ENCODE measurements at regions of chr2 and their contacts with region 1.

Region 1: DNA sequence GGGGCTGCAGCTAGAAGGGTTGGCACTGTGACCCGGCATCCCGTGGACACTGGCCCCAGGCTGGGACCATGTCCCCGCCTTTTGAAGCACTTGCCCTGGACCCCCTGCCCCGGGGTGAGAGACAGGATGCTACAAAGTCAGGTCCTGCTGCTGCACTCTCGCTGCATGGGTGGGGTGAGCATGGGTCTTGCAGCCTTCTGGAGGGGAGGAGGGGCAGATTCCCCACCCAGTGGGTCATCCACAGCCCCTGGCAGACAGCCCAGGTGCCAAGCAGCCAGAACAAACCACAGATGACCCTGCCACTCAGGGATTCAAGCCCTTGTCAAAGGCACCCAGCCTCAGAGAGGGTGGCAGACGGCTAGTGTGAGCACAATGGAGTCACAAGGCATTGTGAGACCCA is 5.7 kb upstream of the NMUR1 start:
- DNase-seq: no peak
- CTCF ChIP-seq: no peak

Region 2: DNA sequence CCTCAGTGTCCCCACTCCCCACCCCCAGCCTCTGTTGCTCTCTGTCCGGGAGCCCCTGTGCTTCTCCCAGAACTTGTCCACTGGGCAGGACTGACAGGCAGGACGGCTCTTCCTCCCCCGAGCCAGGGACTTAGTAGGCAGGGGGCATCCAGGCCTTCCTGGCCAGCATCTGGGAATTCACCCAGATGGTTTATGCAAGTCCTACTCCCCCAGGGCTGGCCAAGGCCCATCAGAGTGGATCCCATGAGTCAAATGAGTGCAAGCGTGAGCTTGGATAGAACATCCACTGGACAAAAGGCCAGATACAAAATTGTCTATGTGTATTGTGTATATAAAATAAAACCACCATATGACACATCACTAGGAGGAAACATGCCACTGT is 13.2 kb before region 1 on chr2:
- CTCF ChIA-PET with region 1: interaction called, 30 read pairs
- POLR2A ChIA-PET with region 1: no interaction called
- DNase-seq: no peak
- CTCF ChIP-seq: no peak

Measured in GM10248 (cell line).